Activated naive CD4-positive, alpha-beta T cell treated with anti-CD3 and anti-CD28 coated beads for 36 hours (primary cell): ENCODE measurements at regions of chr22 and their contacts with region 1.

Region 1: GRCh38 chr22:40533712-40534378 is 102.7 kb downstream of the MRTFA start:
- DNase-seq: peak; percentile 78
- H3K4me3 Mint-ChIP-seq: peak overlapping the region; percentile 68
- H3K27ac Mint-ChIP-seq: peak overlapping the region; percentile 87
- H3K4me1 Mint-ChIP-seq: peaks cover 60% of the 10 kb centered on the region
- H3K27me3 Mint-ChIP-seq: no peaks in the 10 kb centered on the region

Region 2: DNA sequence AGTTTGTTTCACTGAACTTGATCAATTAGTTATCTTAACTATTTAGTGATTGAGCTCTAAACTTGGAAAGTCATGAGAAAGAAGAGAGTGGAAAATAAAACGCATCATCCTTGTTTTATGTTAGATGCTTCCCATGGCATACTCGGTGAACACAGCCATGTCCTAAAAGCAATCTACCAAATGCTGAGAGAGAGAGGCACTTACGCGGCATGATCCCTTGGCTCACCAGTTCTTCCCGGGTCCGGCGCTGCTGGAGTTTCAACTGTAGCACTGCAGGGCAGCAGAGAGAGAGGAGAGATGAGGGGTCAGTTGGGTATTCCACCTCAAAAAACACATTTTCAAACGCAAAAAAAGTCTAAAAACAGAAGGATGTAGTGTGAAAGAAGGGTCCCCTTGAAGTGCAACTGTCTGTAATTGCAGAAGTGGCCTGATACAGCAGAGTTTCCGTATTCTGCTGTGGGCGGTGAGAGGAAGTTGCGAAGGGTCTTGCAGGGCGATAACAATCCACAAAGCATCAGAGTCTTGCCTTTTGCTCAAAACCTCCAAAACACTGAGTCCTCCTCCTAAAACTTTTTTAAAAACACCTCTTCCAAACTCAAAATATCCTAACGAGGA is 70.7 kb before region 1 on chr22:
- CTCF ChIA-PET with region 1: interaction called, 4 read pairs
- intact Hi-C with region 1: loop called (anchors 2 kb)
- DNase-seq: peak; percentile 66
- H3K4me3 Mint-ChIP-seq: peak overlapping the region; percentile 97
- H3K27ac Mint-ChIP-seq: peak overlapping the region; percentile 97
- H3K4me1 Mint-ChIP-seq: peaks cover 68% of the 10 kb centered on the region
- H3K27me3 Mint-ChIP-seq: no peaks in the 10 kb centered on the region

Region 3: DNA sequence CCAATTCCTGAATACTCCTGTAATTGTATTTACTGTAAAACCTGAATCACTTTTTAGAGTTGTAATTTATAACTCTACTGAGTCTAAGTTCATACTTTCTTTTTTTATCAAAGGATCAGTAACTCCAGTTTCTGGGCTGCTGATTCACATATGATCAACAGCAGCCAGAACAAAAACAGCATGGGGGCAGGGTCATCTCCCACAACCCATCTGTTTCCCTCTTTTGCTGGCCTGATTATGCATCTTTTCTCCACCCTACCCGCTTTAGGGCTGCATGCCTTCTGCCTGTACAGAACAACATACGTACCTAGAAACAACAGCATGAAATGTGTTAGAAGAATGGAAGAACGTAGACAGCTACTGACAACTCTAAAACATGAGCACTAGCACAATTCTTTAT is 26.7 kb after region 1 on chr22:
- CTCF ChIA-PET with region 1: no interaction called
- intact Hi-C with region 1: loop called (anchors 2 kb)
- DNase-seq: peak; percentile 54
- H3K4me3 Mint-ChIP-seq: no peak overlapping the region
- H3K27ac Mint-ChIP-seq: peak overlapping the region; percentile 32
- H3K4me1 Mint-ChIP-seq: peaks cover 20% of the 10 kb centered on the region
- H3K27me3 Mint-ChIP-seq: no peaks in the 10 kb centered on the region

Region 4: DNA sequence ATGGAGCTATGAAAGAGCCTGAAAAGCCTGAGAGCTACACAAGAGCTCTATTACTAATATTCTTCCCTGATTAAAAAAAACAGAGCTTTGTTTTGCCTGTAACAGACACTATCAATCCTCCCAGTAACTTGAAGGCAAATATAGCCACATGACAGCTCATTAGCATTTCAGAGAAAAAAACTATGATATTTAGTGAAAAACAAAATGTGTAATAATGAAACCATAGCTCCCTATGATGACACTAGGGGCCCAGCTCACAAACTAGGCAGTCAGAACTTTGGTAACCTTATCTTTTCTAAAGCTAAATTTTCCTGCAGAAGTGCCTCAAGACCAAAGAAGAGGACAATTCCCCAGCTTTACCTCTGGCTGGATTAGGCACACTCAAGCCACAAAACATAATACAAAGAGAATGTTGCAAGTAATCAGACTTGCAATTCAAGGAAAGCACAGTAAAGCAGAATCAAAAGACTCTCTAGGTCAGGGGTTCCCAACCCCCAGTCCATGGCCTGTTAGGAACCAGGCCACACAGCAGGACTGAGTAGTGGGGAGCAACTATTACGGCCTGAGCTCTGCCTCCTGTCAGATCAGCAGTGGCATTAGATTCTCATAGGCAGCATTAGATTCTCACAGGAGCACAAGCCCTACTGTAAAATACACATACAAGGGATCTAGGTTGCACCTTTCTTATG is 49.4 kb after region 1 on chr22:
- CTCF ChIA-PET with region 1: interaction called, 4 read pairs
- intact Hi-C with region 1: loop called (anchors 2 kb)
- DNase-seq: peak; percentile 49
- H3K4me3 Mint-ChIP-seq: no peak overlapping the region
- H3K27ac Mint-ChIP-seq: peak overlapping the region; percentile 34
- H3K4me1 Mint-ChIP-seq: peaks cover 42% of the 10 kb centered on the region
- H3K27me3 Mint-ChIP-seq: no peaks in the 10 kb centered on the region

Region 5: DNA sequence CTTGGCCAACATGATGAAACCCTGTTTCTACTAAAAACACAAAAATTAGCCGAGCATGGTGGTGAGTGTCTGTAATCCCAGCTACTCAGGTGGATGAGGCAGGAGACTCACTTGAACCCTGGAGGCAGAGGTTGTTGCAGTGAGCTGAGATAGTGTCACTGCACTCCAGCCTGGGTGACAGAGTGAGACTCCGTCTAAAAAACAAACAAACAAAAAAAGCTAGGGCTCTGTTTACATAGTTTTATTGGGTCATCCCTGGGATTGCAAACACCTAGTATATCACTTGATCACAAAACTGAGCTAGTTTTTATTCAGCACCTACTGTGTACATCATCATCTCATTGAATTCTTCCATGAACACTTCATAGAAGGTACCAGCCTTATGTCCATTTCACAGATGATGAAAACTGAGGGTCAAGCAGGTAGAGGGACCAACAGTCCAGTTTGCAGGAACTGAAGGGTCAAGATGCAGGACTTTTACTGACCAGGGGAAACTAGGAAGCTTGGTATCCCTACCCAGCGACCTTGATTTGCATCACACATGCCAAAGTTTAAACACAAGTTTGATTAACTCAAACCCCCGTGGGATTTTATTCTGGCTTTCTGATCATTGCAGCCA is 111.8 kb after region 1 on chr22:
- CTCF ChIA-PET with region 1: interaction called, 28 read pairs
- intact Hi-C with region 1: no loop called
- DNase-seq: no peak
- H3K4me3 Mint-ChIP-seq: no peak overlapping the region
- H3K27ac Mint-ChIP-seq: no peak overlapping the region
- H3K4me1 Mint-ChIP-seq: peaks cover 4% of the 10 kb centered on the region
- H3K27me3 Mint-ChIP-seq: no peaks in the 10 kb centered on the region

Region 6: GRCh38 chr22:40668611-40669411 is 135.0 kb after region 1 on chr22:
- CTCF ChIA-PET with region 1: no interaction called
- intact Hi-C with region 1: no loop called
- DNase-seq: peak; percentile 50
- H3K4me3 Mint-ChIP-seq: peak overlapping the region; percentile 33
- H3K27ac Mint-ChIP-seq: peak overlapping the region; percentile 88
- H3K4me1 Mint-ChIP-seq: peaks cover 22% of the 10 kb centered on the region
- H3K27me3 Mint-ChIP-seq: no peaks in the 10 kb centered on the region

Region 7: GRCh38 chr22:40898850-40899357 is 365.1 kb after region 1 on chr22:
- CTCF ChIA-PET with region 1: no interaction called
- intact Hi-C with region 1: loop called (anchors 10 kb)
- DNase-seq: peak; percentile 45
- H3K4me3 Mint-ChIP-seq: peak overlapping the region; percentile 17
- H3K27ac Mint-ChIP-seq: peak overlapping the region; percentile 54
- H3K4me1 Mint-ChIP-seq: peaks cover 12% of the 10 kb centered on the region
- H3K27me3 Mint-ChIP-seq: no peaks in the 10 kb centered on the region